Colonic mucosa (tissue), 4 donors: ENCODE measurements at regions of chr17 and their contacts with region 1.

Region 1: DNA sequence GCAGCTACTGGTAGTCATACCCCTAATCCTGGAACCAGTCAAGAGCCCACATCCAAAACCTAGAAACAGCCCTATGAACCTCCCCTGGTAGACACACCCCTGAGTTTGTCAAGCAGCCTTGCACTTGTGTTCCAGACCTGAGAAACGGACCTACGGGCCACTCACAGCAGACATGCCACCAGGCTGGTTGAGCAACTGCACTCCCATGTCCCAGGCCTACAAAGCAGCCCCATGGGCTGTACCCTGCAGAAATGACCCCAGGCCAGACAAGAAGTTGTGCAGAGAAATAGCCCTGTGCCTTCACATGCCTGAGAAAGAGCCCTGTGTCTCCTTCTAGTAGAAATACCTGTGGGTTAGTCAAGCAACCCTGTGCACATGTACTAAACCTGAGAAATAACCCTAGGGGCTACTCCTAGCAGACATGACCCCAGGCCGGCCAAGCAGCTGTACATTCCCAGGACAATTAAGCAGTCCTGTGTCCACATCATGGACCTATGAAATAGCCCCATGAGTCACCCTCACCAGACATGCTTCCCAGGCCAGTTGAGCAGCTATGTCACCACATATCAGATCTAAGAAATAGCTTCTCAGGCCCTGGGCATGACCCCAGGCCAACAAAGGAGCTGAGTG is 519.6 kb upstream of the CA10 start:
- DNase-seq: no peak
- H3K4me3 ChIP-seq: no peak overlapping the region
- H3K27ac ChIP-seq: no peak overlapping the region
- H3K4me1 ChIP-seq: no peaks in the 10 kb centered on the region
- H3K27me3 ChIP-seq: no peaks in the 10 kb centered on the region
- CTCF ChIP-seq: no peak

Region 2: GRCh38 chr17:52606098-52606497 is 72.0 kb before region 1 on chr17:
- intact Hi-C with region 1: loop called (anchors 10 kb)
- DNase-seq: no peak
- H3K4me3 ChIP-seq: no peak overlapping the region
- H3K27ac ChIP-seq: no peak overlapping the region
- H3K4me1 ChIP-seq: no peaks in the 10 kb centered on the region
- H3K27me3 ChIP-seq: no peaks in the 10 kb centered on the region
- CTCF ChIP-seq: no peak

Region 3: GRCh38 chr17:52724578-52724977 is 46.5 kb after region 1 on chr17:
- intact Hi-C with region 1: no loop called
- DNase-seq: no peak
- H3K4me3 ChIP-seq: no peak overlapping the region
- H3K27ac ChIP-seq: no peak overlapping the region
- H3K4me1 ChIP-seq: no peaks in the 10 kb centered on the region
- H3K27me3 ChIP-seq: no peaks in the 10 kb centered on the region
- CTCF ChIP-seq: no peak